ENCODE measurements at regions of chr14 and their contacts with region 1.

Region 1: GRCh38 chr14:51283402-51284085 is 43.5 kb downstream of the TMX1 start:
- DNase-seq: peak; percentile 89
- H3K4me3 ChIP-seq: no peak overlapping the region
- CTCF ChIP-seq: peak; percentile 66

Region 2: DNA sequence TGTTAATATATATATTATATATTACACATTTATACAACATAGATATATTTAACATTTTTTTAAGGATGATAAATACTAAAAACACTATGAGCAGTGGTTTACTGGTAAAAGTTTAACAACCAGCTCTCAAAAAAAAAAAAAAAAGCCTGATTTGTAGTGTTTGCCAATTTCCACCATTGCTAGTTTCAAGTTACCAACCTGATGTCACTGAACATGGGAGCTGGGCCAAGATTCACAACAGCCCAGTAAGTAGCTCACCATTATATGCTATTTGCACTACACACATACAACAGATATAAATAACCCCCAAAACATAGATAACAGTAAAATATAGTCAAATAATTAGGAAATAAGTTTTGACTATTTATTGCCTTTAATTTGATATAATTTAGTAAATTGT is 72.4 kb before region 1 on chr14:
- in situ Hi-C with region 1: no loop called
- DNase-seq: peak; percentile 50
- H3K4me3 ChIP-seq: no peak overlapping the region
- CTCF ChIP-seq: no peak

Region 3: DNA sequence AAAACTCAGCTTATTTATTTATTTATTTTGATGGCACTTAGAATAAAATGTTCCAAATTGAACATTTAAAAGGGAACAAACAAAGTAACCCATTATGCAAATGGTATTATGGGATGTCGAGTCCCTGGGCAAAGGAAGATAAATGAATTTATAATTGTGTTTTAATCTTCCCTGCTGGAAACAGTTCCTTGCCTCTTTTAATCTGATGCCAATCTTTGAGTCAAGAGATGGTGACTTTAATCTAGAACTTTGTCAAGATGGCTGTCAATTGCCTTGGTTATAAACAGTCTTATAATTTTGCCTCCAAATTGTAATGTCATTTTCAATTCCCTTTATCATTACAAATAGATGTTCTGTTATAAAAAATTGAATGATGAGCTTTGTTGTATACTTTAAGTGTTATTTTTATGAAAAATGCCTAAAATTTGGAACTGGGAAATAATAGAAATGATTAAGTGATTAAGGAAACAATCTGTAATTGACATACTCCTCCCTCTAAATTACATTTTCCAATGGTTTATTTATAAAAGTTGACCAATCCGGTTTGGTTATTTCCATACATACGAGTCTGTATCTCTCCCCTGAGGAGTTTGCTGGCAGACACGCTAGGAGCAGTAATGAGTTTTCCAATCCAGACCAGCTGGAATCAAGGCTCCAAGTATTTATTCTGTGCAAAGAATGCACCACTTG is 233.3 kb after region 1 on chr14:
- in situ Hi-C with region 1: loop called (anchors 5 kb)
- DNase-seq: no peak
- H3K4me3 ChIP-seq: no peak overlapping the region
- CTCF ChIP-seq: no peak

Region 4: GRCh38 chr14:51780006-51780692 is 496.6 kb after region 1 on chr14:
- in situ Hi-C with region 1: loop called (anchors 10 kb)
- DNase-seq: peak; percentile 44
- H3K4me3 ChIP-seq: no peak overlapping the region
- CTCF ChIP-seq: peak; percentile 77

Measured in astrocyte of the cerebellum (primary cell).